B cell (primary cell): ENCODE measurements at regions of chr18 and their contacts with region 1.

Region 1: DNA sequence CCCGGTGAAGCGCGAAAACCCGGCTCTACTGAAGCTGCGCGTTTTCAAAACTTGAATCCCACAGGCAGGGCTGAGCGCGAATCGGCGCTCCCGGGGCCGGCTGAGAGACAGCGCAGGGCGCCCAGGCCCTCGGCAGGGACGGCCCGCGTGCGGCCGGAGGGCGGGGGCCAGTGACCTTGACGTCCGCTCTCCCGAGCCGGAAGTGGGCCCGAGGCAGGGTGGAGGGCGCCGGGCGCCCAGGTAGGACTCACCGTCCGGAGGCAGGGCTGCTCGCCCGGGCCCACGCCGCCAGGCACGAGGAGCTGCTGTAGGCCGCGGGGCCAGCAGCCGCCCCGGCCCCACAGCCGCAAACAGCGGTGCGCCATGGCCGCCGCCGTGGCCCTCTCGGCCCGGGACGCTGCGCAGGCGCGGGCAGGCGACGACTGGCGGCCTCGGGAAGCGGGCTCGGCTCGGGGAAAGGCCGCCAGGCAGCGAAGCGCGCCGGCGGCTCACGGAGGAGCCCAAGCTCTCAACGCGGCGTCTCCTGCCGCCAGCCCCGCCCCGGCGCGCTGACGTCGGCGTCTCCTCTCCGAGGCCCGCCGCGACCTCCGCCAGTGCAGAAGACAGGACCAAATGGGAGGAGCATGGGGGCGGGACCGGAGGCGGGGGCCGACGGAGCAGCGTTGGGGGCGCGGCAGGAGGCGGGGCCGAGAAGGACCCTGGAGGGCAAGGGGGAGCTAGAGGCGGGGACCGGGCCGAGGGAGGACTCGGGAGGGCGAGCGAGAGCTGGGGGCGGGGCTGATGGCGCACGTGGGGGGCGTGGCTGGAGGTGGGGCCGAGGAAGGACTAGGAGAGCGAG is at the start of gene AFG3L2:
- DNase-seq: peak; percentile 100
- ATAC-seq: peak; percentile 87
- H3K4me3 ChIP-seq: peak within 1 kb of the TSS; percentile 46 to 82 (median 69)
- H3K4me3 Mint-ChIP-seq: peak within 1 kb of the TSS; percentile 92
- H3K27ac ChIP-seq: peak within 1 kb of the TSS; percentile 67 to 96
- H3K27ac Mint-ChIP-seq: peak within 1 kb of the TSS; percentile 88
- H3K4me1 ChIP-seq: peaks cover 10 to 22% of the 10 kb centered on the region in 2 donors
- H3K4me1 Mint-ChIP-seq: peaks cover 33% of the 10 kb centered on the region
- H3K27me3 ChIP-seq: no peaks in the 10 kb centered on the region
- H3K27me3 Mint-ChIP-seq: no peaks in the 10 kb centered on the region
- CTCF ChIP-seq: no peak
- total RNA-seq, gene AFG3L2: 39.2 and 40.7 TPM in 2 replicates

Region 2: DNA sequence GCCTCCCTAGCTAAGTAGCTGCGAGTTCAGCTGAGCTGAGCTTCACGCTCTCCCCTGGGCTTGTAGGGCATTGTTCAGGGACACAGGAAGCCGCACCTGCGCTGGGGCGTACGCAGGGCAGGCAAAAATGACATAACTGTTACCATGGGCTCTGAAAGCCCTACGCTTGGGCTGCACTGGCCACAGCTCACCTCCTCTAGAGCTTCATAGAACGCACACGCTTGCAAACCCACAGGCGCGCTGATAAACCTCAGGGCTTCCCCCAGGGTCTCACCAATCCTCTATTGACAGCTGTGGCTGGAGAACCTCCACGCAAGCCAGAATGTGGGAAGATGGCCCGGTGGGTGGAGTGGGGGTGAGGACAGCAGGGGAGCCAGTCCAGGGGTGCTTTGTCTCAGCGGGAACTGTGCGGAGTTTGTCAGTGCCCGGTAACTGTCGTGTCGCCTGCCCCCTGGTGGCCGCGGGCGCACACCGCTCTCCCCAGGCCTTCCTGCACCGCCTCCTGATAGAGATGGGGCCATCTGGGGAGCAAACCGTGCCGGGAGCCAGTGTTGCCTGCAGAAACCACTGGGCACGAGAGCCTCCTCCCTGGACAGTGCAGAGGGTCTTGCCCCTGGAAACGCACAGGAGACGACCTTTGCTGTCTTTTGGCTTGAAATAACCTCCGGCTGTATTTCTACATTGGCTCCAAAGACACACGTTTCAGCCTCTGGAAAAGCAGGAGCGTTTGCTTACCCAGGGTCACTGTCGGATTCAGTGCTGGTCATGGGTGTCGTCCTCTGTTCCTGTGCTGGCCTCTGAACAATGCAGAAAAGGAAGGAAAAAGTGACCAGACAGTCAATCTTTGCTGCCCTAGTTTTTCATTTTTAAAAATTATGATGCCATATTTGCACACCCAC is 139.8 kb before region 1 on chr18:
- CTCF ChIA-PET with region 1: no interaction called
- POLR2A ChIA-PET with region 1: no interaction called
- intact Hi-C with region 1: no loop called
- DNase-seq: peak; percentile 70
- ATAC-seq: peak; percentile 92
- H3K4me3 ChIP-seq: no peak overlapping the region
- H3K4me3 Mint-ChIP-seq: no peak overlapping the region
- H3K27ac ChIP-seq: no peak overlapping the region
- H3K27ac Mint-ChIP-seq: no peak overlapping the region
- H3K4me1 ChIP-seq: peaks cover 3 to 4% of the 10 kb centered on the region in 2 donors
- H3K4me1 Mint-ChIP-seq: peaks cover 2% of the 10 kb centered on the region
- H3K27me3 ChIP-seq: peaks cover 0 to 10% (median 2%) of the 10 kb centered on the region in 4 experiments
- H3K27me3 Mint-ChIP-seq: peaks cover 28% of the 10 kb centered on the region
- CTCF ChIP-seq: peak; percentile 92

Region 3: DNA sequence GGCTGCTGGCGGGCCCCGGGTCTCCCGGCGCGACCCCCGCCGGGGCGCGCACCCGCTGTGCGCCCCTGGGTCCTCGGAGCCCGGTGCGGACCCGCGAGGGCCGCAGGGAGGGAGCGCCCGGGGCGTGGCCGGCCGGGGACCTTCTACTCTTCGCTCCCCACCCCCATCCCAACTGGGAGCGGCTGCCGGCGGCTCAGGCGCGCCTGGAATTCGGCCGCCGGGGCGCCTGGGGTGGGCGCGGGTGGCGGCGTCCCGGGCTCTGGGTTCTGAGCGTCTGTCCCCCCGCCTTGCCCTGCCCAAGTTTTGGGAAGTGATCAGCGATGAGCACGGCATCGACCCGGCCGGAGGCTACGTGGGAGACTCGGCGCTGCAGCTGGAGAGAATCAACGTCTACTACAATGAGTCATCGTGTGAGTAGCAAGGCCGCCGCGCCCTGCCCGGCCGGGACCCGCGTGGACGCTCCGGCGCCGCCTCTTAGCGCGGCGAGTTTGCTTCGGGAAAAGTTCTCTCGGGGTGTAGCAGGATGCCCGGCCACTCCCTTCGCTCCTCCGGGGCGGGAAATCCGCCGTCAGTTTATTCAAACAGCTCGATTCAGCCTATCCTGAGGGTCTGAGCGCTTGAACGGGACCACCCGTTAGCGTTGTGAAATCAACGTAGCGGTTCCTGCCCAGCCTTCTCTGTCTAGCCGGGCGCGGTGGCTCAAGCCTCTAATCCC is 68.4 kb before region 1 on chr18:
- CTCF ChIA-PET with region 1: no interaction called
- POLR2A ChIA-PET with region 1: interaction called, 3 read pairs
- intact Hi-C with region 1: loop called (anchors 2 kb)
- DNase-seq: peak; percentile 57
- ATAC-seq: peak; percentile 59
- H3K4me3 ChIP-seq: peak overlapping the region; percentile 52 to 81 (median 61)
- H3K4me3 Mint-ChIP-seq: peak overlapping the region; percentile 86
- H3K27ac ChIP-seq: peak overlapping the region; percentile 18 to 38
- H3K27ac Mint-ChIP-seq: peak overlapping the region; percentile 87
- H3K4me1 ChIP-seq: peaks cover 21 to 34% of the 10 kb centered on the region in 2 donors
- H3K4me1 Mint-ChIP-seq: peaks cover 30% of the 10 kb centered on the region
- H3K27me3 ChIP-seq: peaks cover 0 to 22% (median 11%) of the 10 kb centered on the region in 4 experiments
- H3K27me3 Mint-ChIP-seq: peaks cover 28% of the 10 kb centered on the region
- CTCF ChIP-seq: no peak

Region 4: DNA sequence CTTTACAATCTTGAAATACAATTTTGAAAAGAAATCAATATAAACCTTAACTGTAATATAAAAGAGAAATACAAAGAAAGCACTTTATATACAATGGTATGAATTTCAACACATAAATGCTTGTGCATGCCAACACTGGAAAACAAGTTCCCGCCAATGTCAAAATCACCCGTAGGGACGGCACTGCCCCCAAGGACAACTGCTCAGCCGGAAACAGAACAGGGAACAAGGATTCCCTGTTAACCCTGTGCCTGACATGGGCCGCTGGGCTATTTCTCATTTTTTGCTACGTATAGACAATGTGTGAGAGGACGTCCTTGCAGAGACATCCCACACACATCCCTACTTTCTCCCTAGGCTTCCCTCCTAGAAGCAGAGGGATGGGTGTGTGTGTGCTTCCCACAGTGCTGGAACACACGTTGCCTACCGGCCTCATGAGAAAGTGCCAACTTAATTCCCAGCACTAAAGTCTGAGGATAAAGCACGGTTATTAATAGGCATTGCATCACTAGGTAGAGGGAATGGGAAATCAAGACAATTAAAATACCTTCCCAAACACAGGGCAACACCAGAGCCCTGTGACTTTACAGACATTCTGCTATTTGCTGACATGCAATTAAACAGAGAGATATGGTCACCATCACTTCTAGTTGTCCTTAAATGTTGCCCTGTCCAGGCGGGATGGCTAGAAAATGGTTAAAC is 14.3 kb before region 1 on chr18:
- CTCF ChIA-PET with region 1: no interaction called
- POLR2A ChIA-PET with region 1: no interaction called
- intact Hi-C with region 1: no loop called
- DNase-seq: no peak
- ATAC-seq: no peak
- H3K4me3 ChIP-seq: no peak overlapping the region
- H3K4me3 Mint-ChIP-seq: no peak overlapping the region
- H3K27ac ChIP-seq: no peak overlapping the region
- H3K27ac Mint-ChIP-seq: no peak overlapping the region
- H3K4me1 ChIP-seq: no peaks in the 10 kb centered on the region
- H3K4me1 Mint-ChIP-seq: no peaks in the 10 kb centered on the region
- H3K27me3 ChIP-seq: no peaks in the 10 kb centered on the region
- H3K27me3 Mint-ChIP-seq: no peaks in the 10 kb centered on the region
- CTCF ChIP-seq: no peak

Region 5: DNA sequence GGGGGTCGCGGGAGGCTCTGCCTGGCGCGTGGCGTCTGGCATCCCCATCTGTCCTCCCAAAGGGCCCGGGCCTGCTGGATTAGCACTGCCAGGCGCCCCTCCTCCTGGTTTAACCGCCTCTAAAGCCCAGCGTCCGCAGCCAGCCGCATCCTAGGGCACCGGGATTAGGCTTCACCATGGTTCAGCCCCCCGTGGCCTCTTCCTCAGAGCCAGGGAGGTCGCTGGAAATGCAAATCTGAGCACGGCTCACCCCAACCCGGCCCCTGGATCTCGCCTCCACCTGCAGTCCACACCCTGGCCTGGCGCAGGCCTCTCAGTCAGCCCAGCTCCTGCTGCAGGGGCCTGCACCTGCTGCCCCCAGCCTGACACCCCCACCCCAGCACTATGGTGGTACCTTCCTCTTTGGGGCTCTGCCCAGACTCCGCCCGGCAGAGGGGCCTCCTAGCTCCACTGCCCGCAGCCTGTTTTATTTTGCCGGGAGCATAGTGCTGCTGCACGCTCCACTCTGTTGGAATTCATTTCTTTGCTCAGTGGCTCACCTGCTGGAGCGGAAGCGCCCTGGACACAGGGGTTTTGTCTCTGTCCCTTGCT is 44.0 kb after region 1 on chr18:
- CTCF ChIA-PET with region 1: no interaction called
- POLR2A ChIA-PET with region 1: no interaction called
- intact Hi-C with region 1: loop called (anchors 5 kb)
- DNase-seq: peak; percentile 29
- ATAC-seq: no peak
- H3K4me3 ChIP-seq: peak overlapping the region in 2 of 5 experiments; percentile 19 to 25
- H3K4me3 Mint-ChIP-seq: peak overlapping the region; percentile 77
- H3K27ac ChIP-seq: no peak overlapping the region
- H3K27ac Mint-ChIP-seq: no peak overlapping the region
- H3K4me1 ChIP-seq: peaks cover 5 to 14% of the 10 kb centered on the region in 2 donors
- H3K4me1 Mint-ChIP-seq: peaks cover 15% of the 10 kb centered on the region
- H3K27me3 ChIP-seq: peaks cover 0 to 14% (median 2%) of the 10 kb centered on the region in 4 experiments
- H3K27me3 Mint-ChIP-seq: no peaks in the 10 kb centered on the region
- CTCF ChIP-seq: no peak

Region 6: GRCh38 chr18:12543697-12544096 is 166.8 kb after region 1 on chr18:
- CTCF ChIA-PET with region 1: no interaction called
- POLR2A ChIA-PET with region 1: no interaction called
- intact Hi-C with region 1: no loop called
- DNase-seq: no peak
- ATAC-seq: no peak
- H3K4me3 ChIP-seq: no peak overlapping the region
- H3K4me3 Mint-ChIP-seq: no peak overlapping the region
- H3K27ac ChIP-seq: no peak overlapping the region
- H3K27ac Mint-ChIP-seq: no peak overlapping the region
- H3K4me1 ChIP-seq: no peaks in the 10 kb centered on the region
- H3K4me1 Mint-ChIP-seq: no peaks in the 10 kb centered on the region
- H3K27me3 ChIP-seq: no peaks in the 10 kb centered on the region
- H3K27me3 Mint-ChIP-seq: peaks cover 3% of the 10 kb centered on the region
- CTCF ChIP-seq: no peak

Region 7: GRCh38 chr18:12702221-12703095 is 325.5 kb after region 1 on chr18 and contains the starts of genes CEP76 and PSMG2:
- CTCF ChIA-PET with region 1: interaction called, 5 read pairs
- POLR2A ChIA-PET with region 1: interaction called, 15 read pairs
- intact Hi-C with region 1: loop called (anchors 1 kb)
- DNase-seq: peak; percentile 96
- ATAC-seq: peak; percentile 85
- H3K4me3 ChIP-seq: peak within 1 kb of the TSS; percentile 84 to 95 (median 86)
- H3K4me3 Mint-ChIP-seq: peak within 1 kb of the TSS; percentile 99
- H3K27ac ChIP-seq: peak within 1 kb of the TSS; percentile 96 to 100
- H3K27ac Mint-ChIP-seq: peak within 1 kb of the TSS; percentile 100
- H3K4me1 ChIP-seq: peaks cover 22 to 26% of the 10 kb centered on the region in 2 donors
- H3K4me1 Mint-ChIP-seq: peaks cover 37% of the 10 kb centered on the region
- H3K27me3 ChIP-seq: no peaks in the 10 kb centered on the region
- H3K27me3 Mint-ChIP-seq: no peaks in the 10 kb centered on the region
- CTCF ChIP-seq: no peak
- total RNA-seq, gene CEP76: 10.0 and 12.6 TPM in 2 replicates
- total RNA-seq, gene PSMG2: 61.2 and 64.1 TPM in 2 replicates

Region 8: DNA sequence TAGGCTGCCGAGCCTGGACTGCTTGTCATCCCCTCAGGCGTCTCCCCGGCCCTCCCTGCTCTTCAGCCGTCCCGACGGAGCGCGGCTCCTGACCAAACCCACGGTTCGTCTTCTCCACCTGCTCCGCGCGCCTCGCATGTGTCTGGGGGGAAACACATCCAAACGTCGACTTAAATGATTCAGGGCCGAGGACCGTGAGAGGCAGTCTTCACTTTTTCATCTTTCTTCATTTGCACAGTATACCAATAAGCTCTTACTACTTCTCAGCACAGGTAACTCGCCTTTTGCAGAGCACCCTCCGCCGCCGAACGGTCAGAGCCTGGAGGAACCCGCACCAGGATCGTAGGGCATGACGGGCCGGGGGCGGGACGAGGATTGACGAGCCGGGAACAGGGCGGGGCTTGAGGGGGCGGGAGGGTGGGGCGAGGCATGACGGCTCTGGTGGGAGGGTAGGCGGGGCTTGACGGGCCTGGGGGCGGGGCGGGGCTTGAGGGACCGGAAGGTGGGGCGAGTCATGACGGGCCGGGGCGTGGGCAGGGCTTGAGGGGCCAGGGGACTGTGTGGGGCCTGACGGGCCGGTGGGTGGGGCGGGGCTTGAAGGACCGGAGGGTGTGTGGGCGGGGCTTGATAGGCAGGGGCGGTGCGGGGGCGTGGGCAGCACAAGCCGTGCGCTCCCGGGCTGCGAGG is 570.6 kb after region 1 on chr18 and contains the start of gene SEH1L:
- CTCF ChIA-PET with region 1: no interaction called
- POLR2A ChIA-PET with region 1: interaction called, 9 read pairs
- intact Hi-C with region 1: loop called (anchors 1 kb)
- DNase-seq: no peak
- ATAC-seq: peak; percentile 91
- H3K4me3 ChIP-seq: peak within 1 kb of the TSS; percentile 69 to 97 (median 75)
- H3K4me3 Mint-ChIP-seq: peak within 1 kb of the TSS; percentile 96
- H3K27ac ChIP-seq: peak within 1 kb of the TSS; percentile 88 to 89
- H3K27ac Mint-ChIP-seq: peak within 1 kb of the TSS; percentile 94
- H3K4me1 ChIP-seq: peaks cover 5 to 22% of the 10 kb centered on the region in 2 donors
- H3K4me1 Mint-ChIP-seq: peaks cover 29% of the 10 kb centered on the region
- H3K27me3 ChIP-seq: no peaks in the 10 kb centered on the region
- H3K27me3 Mint-ChIP-seq: no peaks in the 10 kb centered on the region
- CTCF ChIP-seq: no peak
- total RNA-seq, gene SEH1L: 46.4 and 48.1 TPM in 2 replicates